Heart left ventricle (tissue), 16 donors: ENCODE measurements at regions of chr3 and their contacts with region 1.

Region 1: DNA sequence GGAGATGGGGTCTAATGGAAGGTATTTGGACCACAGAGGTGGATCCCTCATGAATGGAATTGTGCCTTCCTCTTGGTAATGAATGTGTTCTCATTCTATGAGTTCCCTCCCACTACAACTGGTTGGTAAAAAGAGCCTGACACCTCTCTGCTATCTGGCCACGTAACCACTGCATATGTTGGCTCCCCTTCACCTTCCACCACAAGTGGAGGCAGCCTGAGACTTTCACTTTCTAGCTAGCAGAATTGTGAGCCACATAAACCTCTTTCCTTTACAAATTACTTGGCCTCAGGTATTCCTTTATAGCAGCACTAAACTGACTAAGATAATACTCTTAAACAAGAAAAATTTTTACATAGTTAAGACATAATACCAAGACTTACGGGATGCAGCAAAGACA is 155.3 kb downstream of the NR1I2 start:
- DNase-seq: no peak
- ATAC-seq: peak in 2 of 4 donors; percentile 42 to 51
- H3K4me3 ChIP-seq: no peak overlapping the region
- H3K27ac ChIP-seq: no peak overlapping the region
- H3K4me1 ChIP-seq: peaks cover 0 to 18% (median 3%) of the 10 kb centered on the region in 12 donors
- H3K27me3 ChIP-seq: no peaks in the 10 kb centered on the region
- CTCF ChIP-seq: no peak
- POLR2A ChIP-seq: no peak

Region 2: GRCh38 chr3:119989981-119990655 is 52.9 kb after region 1 on chr3:
- intact Hi-C with region 1: loop called in 1 of 10 experiments (anchors 10 kb)
- DNase-seq: no peak
- ATAC-seq: no peak
- H3K4me3 ChIP-seq: no peak overlapping the region
- H3K27ac ChIP-seq: no peak overlapping the region
- H3K4me1 ChIP-seq: peaks cover 0 to 40% (median 10%) of the 10 kb centered on the region in 12 donors
- H3K27me3 ChIP-seq: no peaks in the 10 kb centered on the region
- CTCF ChIP-seq: no peak
- POLR2A ChIP-seq: no peak

Region 3: DNA sequence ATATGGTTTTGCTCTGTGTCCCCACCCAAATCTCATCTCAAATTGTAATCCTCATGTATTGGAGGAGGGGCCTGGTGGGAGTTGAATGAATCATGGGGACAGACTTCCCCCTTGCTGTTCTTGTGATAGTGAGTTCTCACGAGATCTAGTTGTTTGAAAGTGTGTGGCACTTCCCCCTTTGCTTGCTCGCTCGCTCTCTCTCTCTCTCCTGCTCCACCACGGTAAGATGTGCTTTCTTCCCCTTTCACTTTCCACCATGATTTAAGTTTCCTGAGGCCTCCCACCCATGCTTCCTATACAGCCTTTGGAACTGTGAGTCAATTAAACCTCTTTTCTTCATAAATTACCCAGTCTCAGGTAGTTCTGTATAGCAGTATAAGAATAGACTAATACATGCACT is 96.4 kb after region 1 on chr3:
- intact Hi-C with region 1: no loop called
- DNase-seq: no peak
- ATAC-seq: no peak
- H3K4me3 ChIP-seq: no peak overlapping the region
- H3K27ac ChIP-seq: no peak overlapping the region
- H3K4me1 ChIP-seq: peaks cover 0 to 51% (median 9%) of the 10 kb centered on the region in 12 donors
- H3K27me3 ChIP-seq: no peaks in the 10 kb centered on the region
- CTCF ChIP-seq: no peak
- POLR2A ChIP-seq: no peak

Region 4: GRCh38 chr3:120137547-120137946 is 200.3 kb after region 1 on chr3:
- intact Hi-C with region 1: no loop called
- DNase-seq: no peak
- ATAC-seq: no peak
- H3K4me3 ChIP-seq: no peak overlapping the region
- H3K27ac ChIP-seq: no peak overlapping the region
- H3K4me1 ChIP-seq: no peaks in the 10 kb centered on the region
- H3K27me3 ChIP-seq: no peaks in the 10 kb centered on the region
- CTCF ChIP-seq: no peak
- POLR2A ChIP-seq: no peak